Activated CD4-positive, alpha-beta memory T cell treated with anti-CD3 and anti-CD28 coated beads for 36 hours (primary cell): ENCODE measurements at regions of chr2 and their contacts with region 1.

Region 1: DNA sequence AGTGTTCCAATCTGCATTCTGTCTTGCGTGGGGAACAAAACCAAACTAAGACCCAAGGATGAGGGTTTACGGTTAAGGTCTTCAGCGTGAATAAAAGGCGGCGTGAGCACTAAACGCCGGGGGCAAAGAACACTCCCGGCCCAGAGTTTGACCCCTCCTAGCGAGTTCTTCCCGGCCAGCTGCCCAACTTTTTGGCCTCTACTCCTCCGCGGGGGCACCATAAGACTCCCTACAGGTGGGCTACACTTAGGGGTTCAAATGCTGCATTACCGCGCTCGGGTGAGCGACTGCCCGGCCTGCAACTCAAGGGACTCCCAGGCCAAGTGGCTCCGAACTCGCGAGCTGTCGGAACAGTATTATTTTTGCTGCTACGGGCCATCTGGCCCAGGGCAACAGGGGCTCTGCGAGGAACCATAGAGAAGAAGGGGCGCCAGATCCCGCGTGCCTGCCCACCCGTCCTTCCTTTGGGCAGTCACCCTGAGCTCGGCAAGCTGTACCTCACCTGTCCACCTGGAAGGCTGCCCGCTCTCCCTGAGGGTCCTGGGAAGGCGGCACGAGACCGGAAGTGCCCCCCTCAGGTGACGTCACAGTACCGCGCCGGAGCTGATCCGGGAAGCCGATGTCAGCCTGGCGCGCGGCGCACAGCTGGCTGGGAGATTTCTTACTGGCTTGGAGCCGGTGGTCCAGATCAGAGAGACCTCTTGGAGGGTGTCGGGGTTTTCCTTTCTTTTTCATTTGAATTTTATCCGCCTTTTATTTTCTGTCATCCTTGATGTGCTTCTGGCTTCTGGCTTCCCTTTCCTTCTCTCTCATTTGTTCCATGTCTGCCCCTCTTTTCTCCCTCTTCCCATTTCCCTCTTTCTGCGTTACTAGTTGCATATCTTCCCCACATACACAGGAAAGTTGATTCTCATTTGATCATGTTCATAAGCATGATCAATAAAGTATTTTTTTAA is at the start of gene LDAH:
- DNase-seq: peak; percentile 90
- H3K4me3 Mint-ChIP-seq: peak within 1 kb of the TSS; percentile 96
- H3K27ac Mint-ChIP-seq: peak within 1 kb of the TSS; percentile 99
- H3K4me1 Mint-ChIP-seq: peaks cover 32% of the 10 kb centered on the region
- H3K27me3 Mint-ChIP-seq: no peaks in the 10 kb centered on the region
- total RNA-seq, gene LDAH: 35.2 to 38.7 TPM

Region 2: GRCh38 chr2:20051532-20052228 is 771.1 kb before region 1 on chr2 and contains the start of gene LAPTM4A:
- CTCF ChIA-PET with region 1: no interaction called
- POLR2A ChIA-PET with region 1: no interaction called
- intact Hi-C with region 1: loop called (anchors 2 kb)
- DNase-seq: peak; percentile 99
- H3K4me3 Mint-ChIP-seq: no peak within 1 kb of the TSS
- H3K27ac Mint-ChIP-seq: no peak within 1 kb of the TSS
- H3K4me1 Mint-ChIP-seq: peaks cover 28% of the 10 kb centered on the region
- H3K27me3 Mint-ChIP-seq: peaks cover 11% of the 10 kb centered on the region
- total RNA-seq, gene LAPTM4A: 26.7 to 29.0 TPM

Region 3: DNA sequence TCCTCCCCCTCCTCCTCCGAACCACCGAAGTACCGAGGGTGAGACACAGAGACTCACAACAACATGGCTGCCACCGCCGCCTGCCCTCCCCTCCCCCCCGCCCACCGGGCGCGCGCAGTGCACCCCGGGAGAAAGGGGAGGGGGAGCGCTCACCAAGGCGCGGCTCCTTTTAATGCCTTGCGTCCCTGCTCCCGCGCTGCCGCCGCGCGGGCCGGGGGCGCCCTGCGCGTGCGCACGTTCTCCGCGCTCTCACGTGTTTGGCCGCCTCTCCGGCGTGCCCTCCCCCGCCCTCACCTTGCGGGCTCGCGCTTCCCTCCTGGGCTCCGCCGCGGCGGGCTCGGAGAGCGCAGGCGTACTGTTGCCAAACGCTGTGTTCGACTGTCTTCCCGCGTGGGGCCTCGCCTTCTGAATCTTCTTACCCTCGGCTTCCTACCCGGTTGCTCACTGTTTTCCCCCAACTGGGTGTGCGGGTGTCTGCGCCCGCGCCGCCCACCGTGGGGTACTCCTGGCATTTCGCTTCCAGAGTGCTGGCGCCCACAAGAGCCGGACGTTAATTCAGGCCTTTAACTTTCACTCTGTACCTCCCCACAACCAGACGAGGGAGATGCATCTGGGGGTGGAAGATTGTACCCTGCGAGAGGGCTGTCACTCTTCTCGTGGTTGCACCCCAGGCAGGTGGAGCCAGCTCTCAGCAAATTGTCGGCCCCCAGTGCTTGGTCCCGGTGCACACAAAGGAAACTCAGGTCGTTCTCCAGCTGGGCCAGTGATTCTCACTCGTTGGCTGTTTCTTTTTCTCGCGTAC is 471.9 kb before region 1 on chr2 and contains the start of gene PUM2:
- CTCF ChIA-PET with region 1: no interaction called
- POLR2A ChIA-PET with region 1: no interaction called
- intact Hi-C with region 1: loop called (anchors 2 kb)
- DNase-seq: peak; percentile 97
- H3K4me3 Mint-ChIP-seq: no peak within 1 kb of the TSS
- H3K27ac Mint-ChIP-seq: peak within 1 kb of the TSS; percentile 93
- H3K4me1 Mint-ChIP-seq: peaks cover 31% of the 10 kb centered on the region
- H3K27me3 Mint-ChIP-seq: no peaks in the 10 kb centered on the region
- total RNA-seq, gene PUM2: 122 TPM

Region 4: DNA sequence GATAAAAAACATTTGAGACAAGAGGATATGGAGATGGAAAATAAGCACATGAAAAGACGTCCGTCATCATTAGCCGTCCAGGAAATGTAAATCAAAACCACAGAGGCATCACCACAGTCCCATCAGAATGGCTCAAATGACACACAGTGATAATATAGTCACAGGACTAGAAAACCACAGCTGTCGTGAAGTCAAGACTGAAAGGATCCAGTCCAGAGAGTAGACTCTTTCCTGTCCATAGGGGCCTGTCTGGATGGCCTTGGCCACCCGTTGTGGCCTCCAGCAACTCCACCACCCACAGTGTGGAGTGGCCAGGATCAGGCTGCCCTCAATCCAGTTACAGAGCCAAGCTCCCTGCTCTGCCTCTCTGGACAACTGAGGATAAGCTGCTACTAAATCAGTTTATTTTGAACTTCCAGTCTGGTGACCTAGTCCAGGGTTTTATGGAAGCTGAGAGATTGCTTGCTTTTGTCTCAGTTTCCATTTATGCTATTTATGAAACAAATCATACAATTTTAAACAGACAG is 315.6 kb before region 1 on chr2:
- CTCF ChIA-PET with region 1: no interaction called
- POLR2A ChIA-PET with region 1: no interaction called
- intact Hi-C with region 1: loop called (anchors 2 kb)
- DNase-seq: peak; percentile 61
- H3K4me3 Mint-ChIP-seq: no peak overlapping the region
- H3K27ac Mint-ChIP-seq: no peak overlapping the region
- H3K4me1 Mint-ChIP-seq: peaks cover 10% of the 10 kb centered on the region
- H3K27me3 Mint-ChIP-seq: peaks cover 3% of the 10 kb centered on the region

Region 5: GRCh38 chr2:20868377-20868776 is 45.6 kb after region 1 on chr2:
- CTCF ChIA-PET with region 1: interaction called, 3 read pairs
- POLR2A ChIA-PET with region 1: interaction called, 3 read pairs
- intact Hi-C with region 1: loop called (anchors 1 kb)
- DNase-seq: peak; percentile 90
- H3K4me3 Mint-ChIP-seq: no peak overlapping the region
- H3K27ac Mint-ChIP-seq: no peak overlapping the region
- H3K4me1 Mint-ChIP-seq: peaks cover 15% of the 10 kb centered on the region
- H3K27me3 Mint-ChIP-seq: peaks cover 19% of the 10 kb centered on the region